Sciatic nerve (tissue), 2 donors: ENCODE measurements at regions of chr3 and their contacts with region 1.

Region 1: DNA sequence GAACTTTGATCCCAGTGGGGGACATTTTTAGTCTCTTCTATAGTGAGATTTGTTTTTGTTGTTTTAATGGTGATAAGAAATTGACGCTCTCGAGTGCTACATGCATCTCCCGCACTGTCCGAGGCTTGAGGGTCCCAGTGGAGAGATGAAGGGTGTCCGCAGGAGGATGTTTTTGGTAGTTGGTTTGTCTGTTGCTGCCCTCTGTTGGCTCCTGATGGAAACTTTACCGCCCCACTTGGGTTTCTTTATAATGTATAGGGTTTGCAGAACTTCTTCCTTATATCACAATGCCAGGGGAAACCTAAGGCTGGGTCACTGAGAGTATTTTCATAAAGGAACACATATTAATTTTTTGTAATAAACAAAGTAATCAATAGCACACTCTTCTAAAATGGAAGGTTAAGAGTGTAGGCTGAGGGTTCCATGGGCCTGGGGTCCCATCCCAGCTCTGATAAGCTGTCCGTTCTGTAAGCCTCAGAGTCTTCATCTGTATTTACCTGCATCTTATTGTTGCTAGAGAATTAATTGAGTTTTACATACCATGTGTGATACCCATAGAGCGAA is 185.3 kb upstream of the FEZF2 start:
- DNase-seq: no peak
- ATAC-seq: no peak

Region 2: DNA sequence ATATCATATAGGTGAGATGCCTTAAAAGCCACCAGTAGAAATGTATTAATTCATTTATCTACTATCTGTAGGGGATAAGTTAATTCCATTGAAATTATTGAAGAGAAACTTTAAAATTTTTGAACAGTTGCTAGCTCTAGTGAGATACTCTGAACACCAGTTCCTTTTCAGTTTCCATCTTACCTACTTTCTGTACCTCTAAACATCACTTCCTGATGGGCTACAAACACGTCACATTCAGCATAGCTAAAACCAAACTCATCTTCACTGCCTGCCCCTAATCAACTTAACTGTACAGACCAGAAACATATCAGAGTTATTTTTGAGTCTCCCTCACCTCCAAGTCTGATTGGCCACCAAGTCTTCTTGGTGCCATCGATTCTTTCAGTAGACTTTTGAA is 274.2 kb before region 1 on chr3:
- intact Hi-C with region 1: no loop called
- DNase-seq: no peak
- ATAC-seq: no peak

Region 3: DNA sequence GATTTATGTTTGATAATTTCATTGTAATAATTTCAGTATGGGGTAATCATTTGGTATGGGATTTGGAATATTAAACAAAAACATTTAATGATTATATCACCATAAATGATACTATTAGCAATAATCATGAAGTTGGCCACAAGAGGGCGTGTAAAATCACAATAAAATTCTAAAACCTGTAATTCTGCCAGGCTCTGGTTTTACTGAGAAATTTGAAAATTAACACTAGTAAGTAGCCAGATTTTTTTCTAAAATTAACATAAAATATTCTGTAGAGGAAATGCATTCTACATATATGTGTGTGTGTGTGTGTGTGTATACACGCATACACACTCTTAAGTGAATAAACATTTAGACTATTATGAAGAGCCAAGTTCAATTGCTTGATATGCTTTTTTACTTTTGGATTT is 225.8 kb before region 1 on chr3:
- intact Hi-C with region 1: loop called (anchors 10 kb)
- DNase-seq: no peak
- ATAC-seq: no peak

Region 4: GRCh38 chr3:62622553-62623193 is 64.0 kb after region 1 on chr3:
- intact Hi-C with region 1: no loop called
- DNase-seq: no peak
- ATAC-seq: peak; percentile 53